Naive thymus-derived CD4-positive, alpha-beta T cell (primary cell): ENCODE measurements at regions of chr1 and their contacts with region 1.

Region 1: DNA sequence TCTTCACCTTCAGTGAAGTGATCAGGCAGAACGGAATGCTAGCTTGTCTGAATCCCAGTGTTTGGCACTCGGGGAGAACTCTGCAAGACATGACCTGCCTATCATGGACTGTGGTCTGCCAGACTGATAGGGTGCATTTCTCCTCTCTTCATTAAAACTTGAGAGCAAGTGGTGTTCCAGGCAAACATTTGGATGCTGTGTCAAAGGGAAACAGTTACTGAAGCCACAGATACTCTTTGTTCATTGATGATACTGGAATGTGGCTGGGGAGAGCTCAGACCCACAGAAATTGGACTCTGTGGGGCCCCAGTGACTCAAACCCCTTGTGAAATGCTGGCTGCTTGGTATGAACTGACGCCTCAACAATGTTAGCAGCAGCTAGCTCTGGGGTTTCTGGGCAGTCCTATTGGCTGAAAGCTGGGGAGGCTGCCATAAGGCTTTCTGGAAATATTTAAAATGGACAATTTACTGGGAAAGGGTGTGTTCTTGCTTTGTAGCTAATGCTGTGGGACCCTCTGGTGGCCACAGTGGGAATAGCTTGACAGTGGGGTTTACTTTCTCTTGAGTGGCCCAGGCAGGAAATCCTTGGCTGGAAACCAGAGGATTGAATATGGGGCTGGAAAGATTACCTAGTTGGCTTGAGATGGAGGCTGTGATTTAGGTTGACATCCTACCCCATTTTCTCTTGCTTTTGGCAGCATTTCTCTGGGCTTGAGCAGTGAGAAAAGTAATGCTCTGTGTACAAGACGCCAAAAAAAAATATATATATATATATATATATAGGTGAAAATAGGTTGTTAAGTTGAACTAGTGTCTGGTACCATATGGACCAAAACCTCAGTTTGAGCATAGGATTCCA is 8.0 kb upstream of the S100A10 start:
- DNase-seq: peak; percentile 51 to 70 (median 67)
- ATAC-seq: peak; percentile 83
- H3K4me3 ChIP-seq: no peak overlapping the region
- H3K4me3 Mint-ChIP-seq: no peak overlapping the region
- H3K27ac ChIP-seq: no peak overlapping the region
- H3K27ac Mint-ChIP-seq: peak overlapping the region in 1 of 9 donors; percentile 62
- H3K4me1 ChIP-seq: no peaks in the 10 kb centered on the region
- H3K4me1 Mint-ChIP-seq: peaks cover 0 to 16% (median 0%) of the 10 kb centered on the region in 7 donors
- H3K27me3 ChIP-seq: no peaks in the 10 kb centered on the region
- H3K27me3 Mint-ChIP-seq: peaks cover 0 to 42% (median 0%) of the 10 kb centered on the region in 5 donors

Region 2: GRCh38 chr1:151888972-151889570 is 112.5 kb before region 1 on chr1:
- CTCF ChIA-PET with region 1: interaction called, 67 read pairs
- POLR2A ChIA-PET with region 1: interaction called, 12 read pairs
- intact Hi-C with region 1: loop called (anchors 1 kb)
- DNase-seq: peak in 5 of 9 donors; percentile 27 to 48 (median 37)
- ATAC-seq: peak; percentile 68
- H3K4me3 ChIP-seq: no peak overlapping the region
- H3K4me3 Mint-ChIP-seq: no peak overlapping the region
- H3K27ac ChIP-seq: no peak overlapping the region
- H3K27ac Mint-ChIP-seq: peak overlapping the region in 7 of 9 donors; percentile 7 to 91 (median 70)
- H3K4me1 ChIP-seq: peaks cover 0 to 12% of the 10 kb centered on the region in 2 donors
- H3K4me1 Mint-ChIP-seq: peaks cover 18 to 40% (median 38%) of the 10 kb centered on the region in 7 donors
- H3K27me3 ChIP-seq: no peaks in the 10 kb centered on the region
- H3K27me3 Mint-ChIP-seq: no peaks in the 10 kb centered on the region

Region 3: GRCh38 chr1:151934048-151934493 is 67.5 kb before region 1 on chr1:
- CTCF ChIA-PET with region 1: interaction called, 88 read pairs
- POLR2A ChIA-PET with region 1: interaction called, 6 read pairs
- intact Hi-C with region 1: loop called (anchors 1 kb)
- DNase-seq: peak in 7 of 9 donors; percentile 31 to 69 (median 59)
- ATAC-seq: peak; percentile 94
- H3K4me3 ChIP-seq: no peak overlapping the region
- H3K4me3 Mint-ChIP-seq: peak overlapping the region in 1 of 10 donors; percentile 49
- H3K27ac ChIP-seq: no peak overlapping the region
- H3K27ac Mint-ChIP-seq: peak overlapping the region in 1 of 9 donors; percentile 41
- H3K4me1 ChIP-seq: no peaks in the 10 kb centered on the region
- H3K4me1 Mint-ChIP-seq: peaks cover 0 to 6% (median 4%) of the 10 kb centered on the region in 7 donors
- H3K27me3 ChIP-seq: no peaks in the 10 kb centered on the region
- H3K27me3 Mint-ChIP-seq: peaks cover 0 to 33% (median 0%) of the 10 kb centered on the region in 5 donors

Region 4: DNA sequence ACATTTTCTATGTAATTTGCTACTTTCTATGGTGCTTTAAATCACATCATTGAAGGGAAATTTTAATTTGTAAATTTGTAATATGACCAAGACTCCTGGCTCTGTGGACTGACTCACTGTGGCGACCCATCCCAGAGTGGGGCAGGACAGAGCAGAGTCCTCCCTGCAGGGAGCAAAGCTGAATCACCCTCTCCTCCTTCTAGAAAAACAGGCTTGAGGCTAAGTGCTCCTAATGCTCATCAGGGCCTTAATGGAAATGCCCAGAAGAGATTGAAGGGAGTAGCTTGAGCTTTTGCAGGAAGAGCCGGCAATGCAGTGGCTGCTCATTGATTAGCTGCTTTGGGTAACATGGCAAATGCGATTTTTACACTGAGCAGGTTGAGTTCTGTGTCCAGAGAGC is 24.8 kb before region 1 on chr1:
- CTCF ChIA-PET with region 1: interaction called, 205 read pairs
- POLR2A ChIA-PET with region 1: interaction called, 3 read pairs
- intact Hi-C with region 1: no loop called
- DNase-seq: no peak
- ATAC-seq: no peak
- H3K4me3 ChIP-seq: no peak overlapping the region
- H3K4me3 Mint-ChIP-seq: no peak overlapping the region
- H3K27ac ChIP-seq: no peak overlapping the region
- H3K27ac Mint-ChIP-seq: no peak overlapping the region
- H3K4me1 ChIP-seq: peaks cover 0 to 4% of the 10 kb centered on the region in 2 donors
- H3K4me1 Mint-ChIP-seq: peaks cover 5 to 25% (median 7%) of the 10 kb centered on the region in 7 donors
- H3K27me3 ChIP-seq: no peaks in the 10 kb centered on the region
- H3K27me3 Mint-ChIP-seq: peaks cover 0 to 22% (median 0%) of the 10 kb centered on the region in 5 donors